ENCODE measurements at regions of chr3 and their contacts with region 1.

Region 1: DNA sequence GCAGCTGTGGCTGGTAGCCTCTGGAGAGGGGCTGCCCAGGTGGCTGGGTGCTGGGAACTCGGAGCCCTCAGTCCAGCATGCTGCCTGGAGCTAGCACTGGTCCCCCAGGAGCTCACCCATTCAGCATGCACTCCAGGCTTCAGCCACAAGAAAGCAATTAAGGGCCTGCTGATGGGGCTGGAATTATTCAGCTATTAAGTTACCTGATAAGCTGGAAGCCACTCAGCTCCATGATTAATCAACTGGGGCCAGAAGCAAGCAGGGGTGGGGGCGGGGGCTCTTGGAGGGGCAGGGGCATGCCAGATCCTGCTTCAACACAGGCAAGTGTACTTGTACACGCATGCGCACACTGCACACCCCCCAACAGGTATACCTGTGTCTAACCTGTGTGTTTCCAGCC is 22.1 kb upstream of the TMEM115 start:
- DNase-seq: no peak
- H3K4me3 ChIP-seq: no peak overlapping the region
- H3K27ac ChIP-seq: no peak overlapping the region
- H3K4me1 ChIP-seq: peaks cover 0 to 5% (median 2%) of the 10 kb centered on the region in 4 experiments; a peak in 2 of 7 replicates
- H3K27me3 ChIP-seq: peaks cover 0 to 3% (median 0%) of the 10 kb centered on the region in 4 experiments; a peak in 1 of 7 replicates
- CTCF ChIP-seq: no peak
- EP300 ChIP-seq: no peak
- POLR2A ChIP-seq: no peak
- RAD21 ChIP-seq: no peak

Region 2: DNA sequence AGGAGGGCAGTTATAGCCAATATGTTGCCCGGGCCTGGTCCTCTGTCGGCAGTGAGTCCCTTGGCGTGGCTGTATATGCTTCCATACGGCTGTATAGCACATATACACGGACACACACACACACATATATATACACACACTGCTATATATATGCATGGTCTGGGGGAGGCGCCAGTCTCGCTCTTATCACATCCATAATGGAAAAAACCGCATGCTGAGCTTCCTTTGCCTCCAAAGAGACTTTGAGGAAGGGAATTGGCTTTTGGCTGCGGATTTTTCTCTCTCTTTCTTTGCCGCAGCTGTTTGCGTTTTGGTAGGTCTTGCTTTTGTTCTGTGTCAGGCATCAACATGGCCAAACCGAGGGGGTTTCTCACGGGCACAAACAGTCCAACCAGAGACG is 10.8 kb before region 1 on chr3:
- CTCF ChIA-PET with region 1: interaction called, 20 read pairs
- POLR2A ChIA-PET with region 1: interaction called, 5 read pairs
- DNase-seq: no peak
- H3K4me3 ChIP-seq: no peak overlapping the region
- H3K27ac ChIP-seq: no peak overlapping the region
- H3K4me1 ChIP-seq: peaks cover 0 to 32% (median 23%) of the 10 kb centered on the region in 4 experiments; a peak in 6 of 7 replicates
- H3K27me3 ChIP-seq: no peaks in the 10 kb centered on the region; a peak in 2 of 7 replicates
- CTCF ChIP-seq: peak in 1 of 3 experiments; percentile 34; a peak in 1 of 4 replicates
- EP300 ChIP-seq: no peak
- POLR2A ChIP-seq: no peak
- RAD21 ChIP-seq: peak; percentile 41 to 44; a peak in 3 of 4 replicates

Measured in H1 (cell line).